Activated T-helper 2 cell treated with anti-CD3 and anti-CD28 coated beads, Interferon-gamma antibody, Interleukin-2, Interleukin-4, amounts not matched to agents 10 μg/mL and 5 μg/mL and 100 μg/mL, durations not matched to agents 14 hours and 24 hours and 36 hours (primary cell): ENCODE measurements at regions of chr2 and their contacts with region 1.

Region 1: GRCh38 chr2:239216614-239217273 is 184.1 kb downstream of the HDAC4 start:
- DNase-seq: peak; percentile 32
- H3K4me3 Mint-ChIP-seq: peak overlapping the region; percentile 65
- H3K27ac Mint-ChIP-seq: peak overlapping the region; percentile 88
- H3K4me1 Mint-ChIP-seq: peaks cover 53% of the 10 kb centered on the region
- H3K27me3 Mint-ChIP-seq: no peaks in the 10 kb centered on the region

Region 2: DNA sequence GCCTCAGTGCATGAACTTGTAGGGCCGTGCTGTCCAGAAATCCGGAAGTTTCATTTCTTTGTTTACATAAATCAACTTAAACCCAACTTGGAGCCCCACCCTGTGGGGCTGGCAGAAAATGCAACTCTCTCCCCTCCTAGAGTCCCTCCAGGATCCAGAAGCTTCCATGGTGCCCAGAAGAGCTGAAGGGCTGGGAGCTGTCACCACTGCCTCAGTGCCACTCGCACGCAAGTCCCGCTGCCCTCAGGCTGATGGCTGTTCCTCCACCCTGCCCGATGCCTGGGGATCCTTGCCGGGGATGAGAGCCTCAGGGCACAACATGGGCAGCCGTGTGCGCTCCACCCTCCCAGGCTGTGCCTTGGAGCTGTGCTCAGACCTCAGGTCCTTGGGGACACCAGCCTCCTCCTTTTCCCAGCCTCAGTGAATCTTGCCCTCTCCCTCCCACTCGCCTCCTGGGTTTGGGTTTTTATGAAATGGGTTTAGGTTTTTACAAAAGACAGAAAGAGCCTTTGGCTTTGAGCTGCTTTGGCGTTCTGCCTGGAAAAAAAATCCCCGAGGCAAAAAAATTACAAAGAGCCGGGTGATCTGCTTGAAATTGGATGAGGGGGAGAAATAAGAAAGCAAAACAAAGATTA is 213.7 kb before region 1 on chr2:
- intact Hi-C with region 1: no loop called
- DNase-seq: no peak
- H3K4me3 Mint-ChIP-seq: no peak overlapping the region
- H3K27ac Mint-ChIP-seq: no peak overlapping the region
- H3K4me1 Mint-ChIP-seq: no peaks in the 10 kb centered on the region
- H3K27me3 Mint-ChIP-seq: peaks cover 2% of the 10 kb centered on the region

Region 3: GRCh38 chr2:239025096-239025801 is 191.5 kb before region 1 on chr2:
- intact Hi-C with region 1: no loop called
- DNase-seq: no peak
- H3K4me3 Mint-ChIP-seq: no peak overlapping the region
- H3K27ac Mint-ChIP-seq: no peak overlapping the region
- H3K4me1 Mint-ChIP-seq: no peaks in the 10 kb centered on the region
- H3K27me3 Mint-ChIP-seq: peaks cover 2% of the 10 kb centered on the region

Region 4: DNA sequence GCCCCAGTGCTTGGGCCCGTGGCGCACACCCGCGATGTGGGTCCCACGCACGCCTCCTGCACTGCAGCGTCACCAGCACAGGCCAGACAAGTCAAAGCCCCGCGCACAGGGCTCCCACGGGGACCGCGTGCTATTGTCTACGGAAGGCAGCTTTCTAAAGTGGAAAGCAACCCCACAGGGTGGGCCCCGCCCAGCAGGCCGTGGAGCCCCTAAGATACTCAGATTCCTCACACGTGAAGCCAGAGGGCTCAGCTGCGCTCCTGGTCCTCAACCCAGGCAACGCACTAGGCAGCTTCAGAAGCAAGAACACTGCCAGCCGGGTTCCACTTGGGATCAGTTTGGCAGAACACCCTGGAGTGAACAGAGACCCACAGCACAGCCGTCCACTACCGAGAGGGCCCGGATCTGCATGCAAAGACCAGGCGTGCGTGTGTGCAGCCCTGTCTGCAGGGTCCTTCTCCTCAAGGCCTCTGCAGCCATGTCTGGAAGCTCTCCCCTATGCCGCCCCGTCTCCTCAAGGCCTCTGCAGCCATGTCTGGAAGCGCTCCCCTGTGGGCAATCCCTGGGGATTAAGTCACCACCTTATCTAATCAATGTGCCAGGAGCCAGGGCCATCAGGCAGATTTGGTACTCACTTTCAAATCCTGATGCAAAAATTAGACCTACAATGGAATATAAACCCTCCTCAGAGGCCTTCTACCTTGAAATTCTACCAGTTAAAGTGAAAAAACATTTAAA is 47.3 kb before region 1 on chr2:
- intact Hi-C with region 1: loop called (anchors 1 kb)
- DNase-seq: no peak
- H3K4me3 Mint-ChIP-seq: no peak overlapping the region
- H3K27ac Mint-ChIP-seq: no peak overlapping the region
- H3K4me1 Mint-ChIP-seq: peaks cover 20% of the 10 kb centered on the region
- H3K27me3 Mint-ChIP-seq: no peaks in the 10 kb centered on the region

Region 5: GRCh38 chr2:239257511-239257937 is 40.8 kb after region 1 on chr2:
- intact Hi-C with region 1: loop called (anchors 1 kb)
- DNase-seq: no peak
- H3K4me3 Mint-ChIP-seq: peak overlapping the region; percentile 42
- H3K27ac Mint-ChIP-seq: peak overlapping the region; percentile 85
- H3K4me1 Mint-ChIP-seq: peaks cover 85% of the 10 kb centered on the region
- H3K27me3 Mint-ChIP-seq: no peaks in the 10 kb centered on the region

Region 6: GRCh38 chr2:239544143-239544917 is 327.6 kb after region 1 on chr2:
- intact Hi-C with region 1: loop called (anchors 5 kb)
- DNase-seq: no peak
- H3K4me3 Mint-ChIP-seq: no peak overlapping the region
- H3K27ac Mint-ChIP-seq: peak overlapping the region; percentile 61
- H3K4me1 Mint-ChIP-seq: peaks cover 49% of the 10 kb centered on the region
- H3K27me3 Mint-ChIP-seq: peaks cover 8% of the 10 kb centered on the region